Psoas muscle (tissue), 8 donors: ENCODE measurements at regions of chr2 and their contacts with region 1.

Region 1: DNA sequence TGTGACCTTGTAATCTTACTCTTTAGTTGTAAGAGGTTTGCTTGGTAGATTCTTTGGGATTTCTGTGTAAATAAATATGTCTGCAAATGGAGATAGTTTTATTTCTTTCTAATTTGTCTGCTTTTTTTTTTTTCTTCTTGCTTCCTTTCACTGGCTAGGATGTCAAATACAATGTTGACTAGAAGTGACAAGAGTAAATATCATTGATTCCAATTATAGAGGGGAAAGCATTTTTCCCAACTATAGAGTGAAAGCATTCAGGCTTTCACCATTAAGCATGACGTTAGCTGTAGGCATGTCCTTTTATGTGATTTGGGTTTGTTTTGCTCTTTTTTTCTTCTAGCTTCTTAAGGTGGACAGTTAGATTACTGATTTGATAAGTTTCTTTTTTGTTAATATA is 191.5 kb downstream of the MCFD2 start:
- DNase-seq: no peak
- ATAC-seq: no peak
- H3K4me3 ChIP-seq: no peak overlapping the region
- H3K27ac ChIP-seq: no peak overlapping the region
- H3K4me1 ChIP-seq: peaks cover 66% of the 10 kb centered on the region
- H3K27me3 ChIP-seq: no peaks in the 10 kb centered on the region
- CTCF ChIP-seq: no peak

Region 2: DNA sequence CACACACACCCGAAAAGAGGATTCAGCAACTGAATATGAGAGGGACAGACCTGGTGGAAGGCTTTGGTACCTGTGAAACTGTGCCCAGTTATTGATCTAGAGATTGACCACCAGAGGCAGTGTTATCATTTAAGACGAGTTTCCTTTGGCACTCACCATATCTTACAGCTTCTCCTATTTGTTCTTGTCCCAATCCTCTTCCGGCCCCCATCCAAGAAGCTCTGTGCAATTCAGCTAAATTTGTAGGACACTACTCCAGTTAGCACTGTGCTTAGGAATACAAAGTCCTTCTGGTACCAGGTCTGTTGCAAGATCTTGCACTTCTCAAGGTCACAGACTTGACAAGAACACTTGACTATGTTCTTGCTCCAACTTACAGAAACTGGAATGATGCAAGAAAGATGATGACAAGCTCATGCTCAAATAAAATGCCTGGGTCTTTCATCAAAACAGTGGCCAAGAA is 67.0 kb before region 1 on chr2:
- intact Hi-C with region 1: loop called in 1 of 2 experiments (anchors 2 kb)
- DNase-seq: peak in 1 of 2 donors; percentile 43
- ATAC-seq: peak; percentile 37 to 87 (median 78)
- H3K4me3 ChIP-seq: no peak overlapping the region
- H3K27ac ChIP-seq: no peak overlapping the region
- H3K4me1 ChIP-seq: peaks cover 3% of the 10 kb centered on the region
- H3K27me3 ChIP-seq: no peaks in the 10 kb centered on the region
- CTCF ChIP-seq: peak; percentile 26